Heart left ventricle (tissue), 16 donors: ENCODE measurements at regions of chr2 and their contacts with region 1.

Region 1: GRCh38 chr2:172285010-172285621 is 142.3 kb upstream of the ITGA6 start:
- DNase-seq: peak in 1 of 5 donors; percentile 52
- ATAC-seq: peak; percentile 23 to 61 (median 52)
- H3K4me3 ChIP-seq: no peak overlapping the region
- H3K27ac ChIP-seq: peak overlapping the region in 10 of 12 donors; percentile 32 to 73 (median 50)
- H3K4me1 ChIP-seq: peaks cover 0 to 81% (median 34%) of the 10 kb centered on the region in 12 donors
- H3K27me3 ChIP-seq: no peaks in the 10 kb centered on the region
- CTCF ChIP-seq: no peak
- POLR2A ChIP-seq: no peak

Region 2: DNA sequence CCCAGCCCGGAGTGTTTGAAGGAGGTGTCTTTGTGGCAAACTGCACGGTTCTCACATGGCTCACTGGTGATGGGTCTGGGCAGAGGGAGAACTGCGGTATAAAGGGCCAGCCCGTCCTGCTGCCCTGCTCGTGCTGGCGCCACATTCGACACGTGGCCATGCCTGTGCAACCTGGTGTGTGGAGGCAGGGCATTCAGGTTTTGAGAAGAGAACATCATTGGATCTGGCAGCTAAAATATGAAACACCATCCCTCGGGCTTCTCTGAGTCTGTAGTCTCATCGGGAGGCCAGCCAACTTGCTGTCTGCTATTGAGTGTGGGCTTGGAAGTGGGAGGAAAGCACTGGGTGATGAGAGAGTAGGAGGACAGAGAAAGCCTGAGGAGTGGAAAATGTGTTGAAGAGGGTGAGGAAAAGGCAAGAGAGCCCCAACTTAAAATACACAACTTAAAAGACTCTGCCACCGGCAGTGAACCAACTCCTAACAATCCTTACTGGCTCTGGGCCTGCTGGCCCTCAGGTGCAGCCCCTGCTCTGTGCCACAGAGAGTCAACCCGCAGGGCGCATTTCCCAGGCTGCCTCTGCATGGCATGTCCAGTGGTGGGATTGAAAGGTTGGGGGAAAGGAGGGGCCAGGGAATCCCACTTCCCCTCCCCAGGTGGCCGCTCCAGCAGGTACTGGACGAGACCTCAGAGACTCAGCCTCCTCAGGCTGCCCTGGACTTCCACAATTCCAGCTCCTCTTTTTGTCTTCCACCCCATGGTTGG is 69.8 kb before region 1 on chr2:
- intact Hi-C with region 1: loop called in 1 of 10 experiments (anchors 5 kb)
- DNase-seq: no peak
- ATAC-seq: no peak
- H3K4me3 ChIP-seq: no peak overlapping the region
- H3K27ac ChIP-seq: no peak overlapping the region
- H3K4me1 ChIP-seq: peaks cover 0 to 7% (median 0%) of the 10 kb centered on the region in 12 donors
- H3K27me3 ChIP-seq: no peaks in the 10 kb centered on the region
- CTCF ChIP-seq: no peak
- POLR2A ChIP-seq: no peak

Region 3: DNA sequence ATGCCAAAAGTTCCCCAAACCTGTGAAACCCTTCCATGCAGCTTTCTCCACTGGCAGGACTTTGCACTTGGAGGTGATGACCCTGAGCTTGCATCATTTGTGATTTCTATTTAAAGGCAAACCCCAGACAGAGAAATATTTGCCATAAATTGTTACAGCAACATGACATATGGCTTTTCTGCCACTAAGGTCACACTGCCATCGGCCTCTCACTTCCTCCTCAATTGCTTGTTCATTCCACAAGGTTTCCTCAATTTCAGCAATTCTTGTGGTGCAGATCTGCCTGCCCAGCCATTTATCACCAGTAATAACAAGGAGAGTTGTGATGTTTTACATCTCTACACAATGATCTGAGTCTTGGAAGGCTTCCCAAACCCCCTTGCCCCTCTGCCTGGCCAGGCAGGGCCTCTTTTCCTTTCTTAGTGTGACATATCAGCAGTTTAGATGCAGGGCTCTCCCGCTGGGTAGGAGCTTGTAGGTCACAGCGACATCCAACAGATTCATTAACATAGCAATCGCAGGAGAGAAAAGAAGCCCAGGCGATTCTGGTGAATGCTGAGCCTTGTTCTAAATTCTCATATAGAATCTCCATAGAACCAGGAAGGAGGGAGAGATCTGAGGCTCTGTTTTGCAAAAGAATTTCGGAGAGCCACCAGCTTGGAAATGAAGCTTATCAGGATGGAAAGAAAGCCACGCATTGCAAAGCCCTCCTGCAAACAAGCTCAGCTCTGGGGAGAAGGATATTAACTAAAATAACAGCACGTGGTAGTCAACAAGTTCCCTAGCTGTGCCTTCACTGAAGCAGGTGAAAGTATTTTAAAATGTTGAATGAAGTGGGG is 95.5 kb after region 1 on chr2:
- intact Hi-C with region 1: no loop called
- DNase-seq: no peak
- ATAC-seq: no peak
- H3K4me3 ChIP-seq: no peak overlapping the region
- H3K27ac ChIP-seq: no peak overlapping the region
- H3K4me1 ChIP-seq: peaks cover 0 to 27% (median 15%) of the 10 kb centered on the region in 12 donors
- H3K27me3 ChIP-seq: no peaks in the 10 kb centered on the region
- CTCF ChIP-seq: no peak
- POLR2A ChIP-seq: no peak

Region 4: DNA sequence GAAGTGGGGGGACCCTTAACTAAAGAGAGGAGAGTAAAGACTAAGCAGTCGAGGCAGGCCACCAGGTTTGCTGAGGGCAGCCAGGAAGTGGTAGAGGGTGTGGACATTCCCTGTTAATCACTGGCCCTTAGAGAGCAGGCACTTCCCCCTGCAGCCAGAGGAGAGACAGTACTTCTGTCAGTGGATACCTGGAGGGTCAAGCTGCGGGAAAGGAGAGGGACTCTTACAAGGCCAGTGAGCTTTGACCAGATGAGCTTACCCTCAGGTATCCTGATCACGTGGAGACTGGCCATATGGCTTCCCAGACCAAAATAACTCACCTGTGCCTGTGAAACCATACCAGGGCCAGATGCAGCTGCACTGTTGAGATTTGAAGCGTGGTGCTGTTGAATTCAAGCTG is 170.9 kb after region 1 on chr2:
- intact Hi-C with region 1: loop called in 1 of 10 experiments (anchors 10 kb)
- DNase-seq: no peak
- ATAC-seq: peak in 2 of 4 donors; percentile 49 to 57
- H3K4me3 ChIP-seq: no peak overlapping the region
- H3K27ac ChIP-seq: peak overlapping the region in 4 of 12 donors; percentile 1 to 25 (median 14)
- H3K4me1 ChIP-seq: peaks cover 3 to 67% (median 42%) of the 10 kb centered on the region in 12 donors
- H3K27me3 ChIP-seq: no peaks in the 10 kb centered on the region
- CTCF ChIP-seq: peak in 1 of 12 donors; percentile 3
- POLR2A ChIP-seq: no peak